ENCODE measurements at regions of chr5 and their contacts with region 1.

Region 1: GRCh38 chr5:180090098-180090768 is 18.7 kb upstream of the RNF130 start:
- DNase-seq: peak; percentile 87
- H3K4me3 Mint-ChIP-seq: peak overlapping the region; percentile 75
- H3K27ac Mint-ChIP-seq: peak overlapping the region; percentile 43
- H3K4me1 Mint-ChIP-seq: peaks cover 15% of the 10 kb centered on the region
- H3K27me3 Mint-ChIP-seq: no peaks in the 10 kb centered on the region

Region 2: DNA sequence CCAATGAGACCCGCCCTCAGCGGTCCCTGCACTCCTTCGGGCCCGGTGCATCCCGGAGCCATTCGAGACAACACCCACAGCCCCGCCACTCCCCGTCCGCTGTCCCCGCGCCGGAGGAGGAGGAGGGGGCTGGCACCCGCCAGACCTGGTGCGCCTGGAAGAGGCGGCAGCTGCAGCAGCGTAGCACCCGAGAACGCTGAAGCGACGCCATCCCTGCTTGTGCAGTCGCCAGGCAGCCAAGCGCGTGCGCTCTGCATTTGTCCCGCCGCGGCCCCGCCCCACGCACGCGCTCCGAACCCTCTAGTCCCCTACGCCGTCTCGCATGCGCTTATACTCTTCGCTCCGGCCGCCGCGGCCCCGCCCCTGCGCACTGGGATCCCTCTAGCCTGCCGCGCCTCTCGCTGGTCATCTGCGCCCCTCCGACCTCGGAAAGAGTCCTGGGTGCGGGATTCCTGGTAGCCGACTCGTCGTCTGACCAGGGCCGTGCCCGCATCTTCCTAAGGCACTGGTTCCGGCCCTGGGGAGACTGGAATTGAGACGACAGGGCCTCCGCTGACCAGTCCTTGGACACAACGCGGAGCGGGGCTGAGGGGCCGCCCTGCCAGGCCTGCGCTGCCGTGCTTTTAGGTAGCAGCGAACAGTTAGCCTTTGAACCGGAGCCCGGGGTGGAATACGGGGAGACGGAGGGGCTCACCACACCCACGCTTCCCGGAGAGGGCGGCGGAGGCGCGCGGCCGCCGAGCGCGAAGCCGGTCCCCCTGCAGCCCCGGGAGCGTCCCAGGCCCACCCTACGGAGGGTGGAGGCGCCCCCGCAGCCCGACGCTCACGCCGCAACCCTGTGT is 231.4 kb before region 1 on chr5 and contains the start of gene MRNIP:
- CTCF ChIA-PET with region 1: no interaction called
- POLR2A ChIA-PET with region 1: no interaction called
- intact Hi-C with region 1: loop called (anchors 5 kb)
- DNase-seq: peak; percentile 94
- H3K4me3 Mint-ChIP-seq: peak within 1 kb of the TSS; percentile 79
- H3K27ac Mint-ChIP-seq: peak within 1 kb of the TSS; percentile 61
- H3K4me1 Mint-ChIP-seq: peaks cover 16% of the 10 kb centered on the region
- H3K27me3 Mint-ChIP-seq: no peaks in the 10 kb centered on the region
- total RNA-seq, gene MRNIP: 19.8 to 24.9 TPM

Region 3: DNA sequence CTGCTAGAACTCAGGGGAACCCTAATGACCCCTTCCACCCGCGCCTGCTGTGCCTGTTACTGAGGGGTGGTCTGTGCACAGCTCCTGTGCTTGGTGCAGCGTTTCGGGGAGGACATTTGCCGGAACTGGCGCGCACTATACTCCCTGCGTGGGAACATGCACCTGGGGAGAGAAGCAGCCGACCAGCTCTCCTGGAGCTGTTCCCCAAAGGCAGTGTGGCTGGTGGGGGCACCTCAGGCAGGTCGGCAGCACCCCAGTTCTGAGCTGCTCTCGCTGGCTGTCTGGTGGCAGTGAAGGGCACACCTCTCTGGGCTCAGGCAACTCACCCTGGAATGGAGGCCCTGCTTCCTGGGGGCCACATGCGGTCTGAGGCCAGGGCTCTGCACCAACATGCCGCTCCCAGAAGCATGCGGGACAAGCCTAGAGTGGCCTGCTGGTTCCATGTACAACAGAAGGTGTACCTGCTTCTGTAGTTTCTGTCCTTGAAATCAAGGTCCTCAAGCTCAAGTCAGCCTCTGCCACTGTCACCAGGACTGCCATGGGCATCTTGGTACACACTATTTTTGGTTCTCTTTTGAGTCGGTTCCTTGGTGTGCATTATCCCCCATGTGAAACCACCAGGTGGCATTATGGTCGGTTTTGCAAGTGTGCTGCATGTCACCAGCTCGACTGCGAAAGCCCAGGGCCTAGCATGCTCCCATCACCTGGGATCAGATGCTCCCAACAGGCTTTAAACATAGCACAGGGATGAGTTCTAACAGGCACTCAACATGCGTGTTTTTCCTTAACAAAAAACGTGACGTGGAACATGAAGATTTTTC is 223.8 kb before region 1 on chr5:
- CTCF ChIA-PET with region 1: no interaction called
- POLR2A ChIA-PET with region 1: no interaction called
- intact Hi-C with region 1: loop called (anchors 1 kb)
- DNase-seq: peak; percentile 44
- H3K4me3 Mint-ChIP-seq: no peak overlapping the region
- H3K27ac Mint-ChIP-seq: no peak overlapping the region
- H3K4me1 Mint-ChIP-seq: no peaks in the 10 kb centered on the region
- H3K27me3 Mint-ChIP-seq: no peaks in the 10 kb centered on the region

Region 4: DNA sequence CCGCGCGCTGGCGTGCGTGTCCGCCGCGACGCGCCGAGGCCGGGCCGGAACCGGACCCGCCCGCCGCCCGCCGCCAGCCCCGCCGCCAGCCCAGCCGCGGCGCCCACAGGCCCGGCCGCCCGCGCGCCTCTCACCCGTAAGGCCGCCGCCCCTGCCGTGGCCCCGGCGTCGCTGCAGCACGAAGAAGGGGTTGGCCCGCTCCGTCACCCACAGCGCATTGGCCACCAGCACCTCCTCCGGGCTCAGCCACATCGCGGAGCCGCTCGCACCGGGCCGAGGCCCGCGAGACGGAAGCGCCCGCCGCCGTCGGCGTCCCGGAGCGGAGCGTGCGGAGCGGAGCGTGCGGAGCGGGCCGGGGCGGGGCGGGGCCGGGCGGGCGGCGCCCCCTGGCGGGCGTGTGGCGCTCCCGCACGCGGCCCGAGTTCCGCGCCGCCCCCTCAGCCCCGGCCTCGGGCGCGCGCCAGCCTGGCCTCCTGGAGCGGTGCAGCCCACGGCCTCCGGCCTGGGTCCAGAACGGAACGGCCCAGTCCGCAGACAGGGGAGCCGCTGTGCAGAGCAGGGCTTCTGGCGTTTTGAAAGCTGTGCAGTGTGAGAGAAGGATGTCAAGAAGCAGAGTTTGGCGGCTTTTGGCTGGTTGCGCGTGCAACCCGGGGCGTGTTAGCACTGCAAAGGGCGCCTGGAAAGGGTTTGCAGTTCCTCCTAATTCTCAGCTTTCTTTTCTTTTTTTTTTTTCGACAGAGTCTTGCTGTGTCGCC is 182.5 kb before region 1 on chr5 and contains the start of gene TBC1D9B:
- CTCF ChIA-PET with region 1: interaction called, 4 read pairs
- POLR2A ChIA-PET with region 1: no interaction called
- intact Hi-C with region 1: loop called (anchors 5 kb)
- DNase-seq: peak; percentile 71
- H3K4me3 Mint-ChIP-seq: peak within 1 kb of the TSS; percentile 88
- H3K27ac Mint-ChIP-seq: peak within 1 kb of the TSS; percentile 69
- H3K4me1 Mint-ChIP-seq: peaks cover 14% of the 10 kb centered on the region
- H3K27me3 Mint-ChIP-seq: no peaks in the 10 kb centered on the region
- total RNA-seq, gene TBC1D9B: 59.0 to 62.8 TPM

Region 5: GRCh38 chr5:180071531-180072255 is 18.5 kb before region 1 on chr5 and contains the start of gene RNF130:
- CTCF ChIA-PET with region 1: interaction called, 4 read pairs
- POLR2A ChIA-PET with region 1: no interaction called
- intact Hi-C with region 1: loop called (anchors 1 kb)
- DNase-seq: peak; percentile 91
- H3K4me3 Mint-ChIP-seq: peak within 1 kb of the TSS; percentile 78
- H3K27ac Mint-ChIP-seq: peak within 1 kb of the TSS; percentile 63
- H3K4me1 Mint-ChIP-seq: peaks cover 29% of the 10 kb centered on the region
- H3K27me3 Mint-ChIP-seq: peaks cover 2% of the 10 kb centered on the region
- total RNA-seq, gene RNF130: 9.9 to 10.1 TPM